Caco-2 (cell line): ENCODE measurements at regions of chr7 and their contacts with region 1.

Region 1: GRCh38 chr7:43582503-43583423 is at the start of gene STK17A:
- DNase-seq: peak; percentile 92 to 96
- H3K4me3 ChIP-seq: peak within 1 kb of the TSS; percentile 64
- H3K4me3 Mint-ChIP-seq: peak within 1 kb of the TSS; percentile 89
- H3K27ac Mint-ChIP-seq: peak within 1 kb of the TSS; percentile 72
- H3K4me1 ChIP-seq: peaks cover 28% of the 10 kb centered on the region
- H3K4me1 Mint-ChIP-seq: peaks cover 10% of the 10 kb centered on the region
- H3K27me3 ChIP-seq: no peaks in the 10 kb centered on the region
- H3K27me3 Mint-ChIP-seq: no peaks in the 10 kb centered on the region
- CTCF ChIP-seq: peak; percentile 96 to 99
- total RNA-seq, gene STK17A: 19.2 and 19.6 TPM in 2 replicates

Region 2: GRCh38 chr7:42931834-42932651 is 650.7 kb before region 1 on chr7 and contains the starts of genes MRPL32 and PSMA2:
- CTCF ChIA-PET with region 1: no interaction called
- POLR2A ChIA-PET with region 1: interaction called, 10 read pairs
- intact Hi-C with region 1: no loop called
- DNase-seq: peak; percentile 96 to 97
- H3K4me3 ChIP-seq: peak within 1 kb of the TSS; percentile 90
- H3K4me3 Mint-ChIP-seq: peak within 1 kb of the TSS; percentile 95
- H3K27ac Mint-ChIP-seq: peak within 1 kb of the TSS; percentile 99
- H3K4me1 ChIP-seq: peaks cover 10% of the 10 kb centered on the region
- H3K4me1 Mint-ChIP-seq: peaks cover 14% of the 10 kb centered on the region
- H3K27me3 ChIP-seq: no peaks in the 10 kb centered on the region
- H3K27me3 Mint-ChIP-seq: no peaks in the 10 kb centered on the region
- CTCF ChIP-seq: no peak
- total RNA-seq, gene MRPL32: 61.6 and 63.6 TPM in 2 replicates
- total RNA-seq, gene PSMA2: 147 and 159 TPM in 2 replicates

Region 3: DNA sequence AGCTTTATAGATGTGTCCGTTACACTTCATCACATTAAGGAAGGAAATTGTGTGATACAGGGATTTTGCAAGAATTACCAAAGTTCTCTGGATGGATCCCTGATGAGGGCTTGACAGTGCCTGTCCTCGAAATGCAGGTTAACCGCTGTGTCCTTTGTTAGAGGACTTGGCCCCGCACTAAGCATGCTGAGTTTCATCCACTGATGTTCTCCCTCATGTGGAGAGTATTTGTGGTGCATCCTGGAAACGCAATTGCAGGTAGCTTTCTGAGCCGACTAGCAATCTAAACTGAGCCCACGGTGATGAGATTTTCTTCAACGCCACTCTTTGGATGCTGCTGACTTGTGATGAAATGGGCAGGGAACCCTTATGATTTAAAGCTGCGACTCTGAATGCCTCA is 71.7 kb before region 1 on chr7:
- CTCF ChIA-PET with region 1: interaction called, 10 read pairs
- POLR2A ChIA-PET with region 1: no interaction called
- intact Hi-C with region 1: no loop called
- DNase-seq: peak; percentile 50 to 52
- H3K4me3 ChIP-seq: no peak overlapping the region
- H3K4me3 Mint-ChIP-seq: no peak overlapping the region
- H3K27ac Mint-ChIP-seq: no peak overlapping the region
- H3K4me1 ChIP-seq: 0 out of 2 replicates have a peak, but pooled peaks cover 6% of the 10 kb centered on the region
- H3K4me1 Mint-ChIP-seq: peaks cover 7% of the 10 kb centered on the region
- H3K27me3 ChIP-seq: no peaks in the 10 kb centered on the region
- H3K27me3 Mint-ChIP-seq: no peaks in the 10 kb centered on the region
- CTCF ChIP-seq: peak; percentile 38 to 51

Region 4: GRCh38 chr7:43593010-43593409 is 10.2 kb after region 1 on chr7:
- CTCF ChIA-PET with region 1: interaction called, 6 read pairs
- POLR2A ChIA-PET with region 1: interaction called, 9 read pairs
- intact Hi-C with region 1: loop called (anchors 1 kb)
- DNase-seq: no peak
- H3K4me3 ChIP-seq: no peak overlapping the region
- H3K4me3 Mint-ChIP-seq: no peak overlapping the region
- H3K27ac Mint-ChIP-seq: no peak overlapping the region
- H3K4me1 ChIP-seq: peaks cover 5% of the 10 kb centered on the region; the same call in 1 of the 2 replicates
- H3K4me1 Mint-ChIP-seq: peaks cover 10% of the 10 kb centered on the region
- H3K27me3 ChIP-seq: no peaks in the 10 kb centered on the region
- H3K27me3 Mint-ChIP-seq: no peaks in the 10 kb centered on the region
- CTCF ChIP-seq: no peak

Region 5: DNA sequence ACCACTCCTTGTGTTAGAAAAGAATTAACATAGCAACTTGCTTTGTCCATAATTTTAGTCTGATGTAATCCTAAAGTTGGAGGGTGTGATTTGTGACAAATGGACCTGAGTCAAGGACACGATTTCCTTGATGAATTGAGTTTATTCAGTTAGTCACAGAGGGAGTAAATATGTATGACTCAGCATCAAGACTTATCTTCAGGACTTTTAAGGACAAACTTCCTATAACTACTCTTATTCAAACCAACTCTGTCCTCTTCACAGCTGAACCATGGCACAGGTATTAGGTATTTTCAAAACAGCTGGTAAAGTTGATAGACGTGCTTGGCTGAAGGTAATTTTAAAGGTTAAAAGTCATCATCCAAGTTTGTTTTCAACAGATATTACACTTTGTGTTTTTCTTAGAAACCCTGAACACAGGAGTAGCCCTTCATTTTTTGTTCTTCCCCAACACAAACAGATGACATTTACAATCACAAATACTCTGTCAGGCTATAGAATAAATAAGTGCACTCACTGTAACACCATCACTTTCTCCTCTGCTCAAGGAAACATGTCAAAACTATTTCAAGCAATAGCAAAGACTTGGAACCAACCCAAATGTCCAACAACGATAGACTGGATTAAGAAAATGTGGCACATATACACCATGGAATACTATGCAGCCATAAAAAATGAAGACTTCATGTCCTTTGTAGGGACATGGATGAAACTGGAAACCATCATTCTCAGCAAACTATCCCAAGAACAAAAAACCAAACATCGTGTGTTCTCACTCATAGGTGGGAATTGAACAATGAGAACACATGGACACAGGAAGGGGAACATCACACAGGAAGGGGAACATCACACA is 92.0 kb after region 1 on chr7:
- CTCF ChIA-PET with region 1: no interaction called
- POLR2A ChIA-PET with region 1: interaction called, 13 read pairs
- intact Hi-C with region 1: no loop called
- DNase-seq: no peak
- H3K4me3 ChIP-seq: no peak overlapping the region
- H3K4me3 Mint-ChIP-seq: no peak overlapping the region
- H3K27ac Mint-ChIP-seq: no peak overlapping the region
- H3K4me1 ChIP-seq: no peaks in the 10 kb centered on the region
- H3K4me1 Mint-ChIP-seq: no peaks in the 10 kb centered on the region
- H3K27me3 ChIP-seq: no peaks in the 10 kb centered on the region
- H3K27me3 Mint-ChIP-seq: no peaks in the 10 kb centered on the region
- CTCF ChIP-seq: no peak

Region 6: GRCh38 chr7:43729214-43729923 is 146.6 kb after region 1 on chr7 and contains the start of gene COA1:
- CTCF ChIA-PET with region 1: interaction called, 13 read pairs
- POLR2A ChIA-PET with region 1: interaction called, 7 read pairs
- intact Hi-C with region 1: no loop called
- DNase-seq: peak; percentile 88 to 90
- H3K4me3 ChIP-seq: peak within 1 kb of the TSS; percentile 65
- H3K4me3 Mint-ChIP-seq: peak within 1 kb of the TSS; percentile 70
- H3K27ac Mint-ChIP-seq: peak within 1 kb of the TSS; percentile 82
- H3K4me1 ChIP-seq: peaks cover 11% of the 10 kb centered on the region; the same call in 1 of the 2 replicates
- H3K4me1 Mint-ChIP-seq: no peaks in the 10 kb centered on the region
- H3K27me3 ChIP-seq: no peaks in the 10 kb centered on the region
- H3K27me3 Mint-ChIP-seq: no peaks in the 10 kb centered on the region
- CTCF ChIP-seq: no peak
- total RNA-seq, gene COA1: 93.4 and 94.7 TPM in 2 replicates

Region 7: GRCh38 chr7:43942997-43943704 is 360.4 kb after region 1 on chr7:
- CTCF ChIA-PET with region 1: interaction called, 4 read pairs
- POLR2A ChIA-PET with region 1: no interaction called
- intact Hi-C with region 1: loop called (anchors 5 kb)
- DNase-seq: peak; percentile 44
- H3K4me3 ChIP-seq: no peak overlapping the region
- H3K4me3 Mint-ChIP-seq: no peak overlapping the region
- H3K27ac Mint-ChIP-seq: peak overlapping the region; percentile 26
- H3K4me1 ChIP-seq: no peaks in the 10 kb centered on the region
- H3K4me1 Mint-ChIP-seq: peaks cover 10% of the 10 kb centered on the region
- H3K27me3 ChIP-seq: no peaks in the 10 kb centered on the region
- H3K27me3 Mint-ChIP-seq: no peaks in the 10 kb centered on the region
- CTCF ChIP-seq: peak in 1 of 2 experiments; percentile 61